Activated T-helper 1 cell treated with anti-CD3 and anti-CD28 coated beads, Interleukin-12 subunit alpha, Interleukin-12 subunit beta, Interleukin-2, Interleukin-4 antibody, amounts not matched to agents 30 ng/mL and 10 ng/mL and 1 ng/mL, durations not matched to agents 14 hours and 24 hours and 36 hours (primary cell): ENCODE measurements at regions of chr17 and their contacts with region 1.

Region 1: DNA sequence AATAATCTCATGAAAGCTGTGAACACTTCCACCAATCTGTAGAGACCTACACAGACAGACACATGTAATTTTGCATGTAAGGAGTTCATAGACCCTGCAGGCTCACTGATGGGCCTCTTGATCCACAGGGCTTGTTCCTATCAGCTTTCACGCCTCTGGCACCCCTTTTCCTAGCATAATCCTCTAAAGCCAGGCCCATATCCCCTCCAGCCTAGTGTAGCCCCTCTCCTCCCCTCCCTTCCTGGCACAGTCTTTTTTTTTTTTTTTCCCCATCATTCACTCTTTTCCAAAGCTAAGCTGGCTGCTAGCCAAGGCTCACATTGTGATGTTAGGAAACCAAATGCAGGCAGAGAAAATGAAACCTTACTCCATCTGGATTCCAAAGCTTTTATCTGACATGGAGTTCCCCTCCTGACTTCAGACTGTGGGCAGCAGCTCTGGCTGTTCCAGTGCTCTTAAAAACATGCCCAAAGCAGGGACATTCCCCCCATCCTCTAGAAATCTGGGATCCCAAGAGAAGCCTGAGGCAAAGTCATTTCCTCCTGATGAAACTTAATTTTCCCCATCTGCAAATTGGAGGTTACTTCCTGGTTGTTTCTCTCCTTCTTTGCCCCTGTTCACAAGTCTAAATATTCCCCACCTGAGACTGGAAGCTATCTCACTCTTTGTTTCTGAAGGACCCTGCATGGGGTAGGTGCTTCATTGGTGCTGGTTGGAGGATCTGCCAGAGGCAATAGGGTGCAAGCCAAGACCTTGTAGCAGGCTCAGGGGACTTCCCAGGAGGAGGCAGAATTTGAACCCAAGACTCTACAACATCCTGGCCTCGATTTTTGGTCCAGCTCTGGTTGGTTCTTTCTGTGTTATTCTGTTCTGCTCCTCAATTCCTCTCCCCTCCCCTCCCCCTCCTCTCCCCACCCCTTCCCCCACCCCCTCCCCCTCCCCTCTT is 9.9 kb upstream of the CCL5 start:
- DNase-seq: no peak
- H3K4me3 Mint-ChIP-seq: peak overlapping the region; percentile 66
- H3K27ac Mint-ChIP-seq: peak overlapping the region; percentile 94
- H3K4me1 Mint-ChIP-seq: peaks cover 56% of the 10 kb centered on the region
- H3K27me3 Mint-ChIP-seq: no peaks in the 10 kb centered on the region

Region 2: DNA sequence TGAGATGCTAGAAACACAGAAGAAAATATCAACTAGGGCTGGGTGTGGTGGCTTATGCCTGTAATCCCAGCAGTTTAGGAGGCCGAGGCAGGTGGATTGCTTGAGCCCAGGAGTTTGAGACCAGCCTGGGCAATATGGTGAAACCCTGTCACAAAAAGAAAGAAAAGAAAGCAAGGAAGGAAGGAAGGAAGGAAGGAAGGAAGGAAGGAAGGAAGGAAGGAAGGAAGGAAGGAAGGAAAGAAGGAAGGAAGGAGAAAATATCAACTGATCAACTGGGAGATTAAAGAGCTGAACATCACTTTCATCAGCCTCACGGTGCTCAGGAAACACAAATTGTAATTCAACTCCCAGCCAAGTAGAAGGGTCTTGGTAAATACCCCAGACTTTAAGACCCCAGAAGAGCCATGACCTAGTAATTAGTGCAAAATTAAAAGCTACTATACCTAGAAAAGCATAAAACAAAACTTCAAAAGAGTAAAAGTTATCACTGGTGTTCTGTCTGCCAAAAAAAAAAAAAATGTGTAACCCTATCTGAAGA is 413.7 kb before region 1 on chr17:
- intact Hi-C with region 1: no loop called
- DNase-seq: no peak
- H3K4me3 Mint-ChIP-seq: no peak overlapping the region
- H3K27ac Mint-ChIP-seq: peak overlapping the region; percentile 61
- H3K4me1 Mint-ChIP-seq: peaks cover 38% of the 10 kb centered on the region
- H3K27me3 Mint-ChIP-seq: no peaks in the 10 kb centered on the region

Region 3: GRCh38 chr17:35930211-35931065 is 40.3 kb after region 1 on chr17 and contains the start of gene RDM1:
- intact Hi-C with region 1: loop called (anchors 2 kb)
- DNase-seq: peak; percentile 89
- H3K4me3 Mint-ChIP-seq: peak within 1 kb of the TSS; percentile 88
- H3K27ac Mint-ChIP-seq: peak within 1 kb of the TSS; percentile 90
- H3K4me1 Mint-ChIP-seq: peaks cover 29% of the 10 kb centered on the region
- H3K27me3 Mint-ChIP-seq: peaks cover 18% of the 10 kb centered on the region
- total RNA-seq, gene RDM1: 1.7 and 2.3 TPM in 2 replicates

Region 4: DNA sequence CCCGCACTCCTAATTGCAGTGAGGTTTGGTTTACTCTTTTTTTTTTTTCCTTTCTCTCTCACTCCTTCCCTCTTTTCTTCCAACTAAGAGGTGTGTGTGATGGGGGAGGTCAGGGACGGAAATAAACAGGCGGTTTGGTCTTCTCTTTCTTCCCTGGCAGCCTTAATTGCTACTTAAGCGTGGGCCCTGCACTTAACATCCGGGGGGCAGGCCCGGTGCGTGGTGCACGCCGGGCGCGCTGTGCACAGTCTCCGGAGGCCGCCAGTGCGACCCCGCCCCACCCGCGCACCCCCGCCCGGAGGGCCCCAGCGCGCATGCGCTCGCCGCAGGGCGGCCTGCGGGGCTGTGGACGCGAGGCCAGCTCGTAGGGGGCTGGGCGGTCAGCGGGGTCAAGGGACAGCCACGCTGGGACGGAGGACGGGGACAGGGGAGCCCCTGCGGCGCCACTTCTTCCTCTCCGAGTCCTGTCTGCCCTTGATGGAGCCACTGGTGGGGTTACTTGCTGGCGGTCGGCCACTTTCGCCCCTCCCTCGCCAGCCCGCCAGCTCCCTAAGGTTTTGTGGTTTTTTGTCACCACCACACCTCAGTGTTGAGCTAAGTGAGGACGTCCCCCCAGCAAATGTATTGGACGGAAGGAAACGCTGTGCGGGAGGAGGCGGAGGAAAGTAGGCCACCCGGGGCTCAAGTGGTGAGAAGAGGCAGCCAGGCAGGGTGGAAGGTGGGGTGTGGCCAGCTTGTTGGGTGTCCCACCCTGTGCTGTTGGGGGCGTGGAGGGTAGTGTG is 832.2 kb after region 1 on chr17:
- intact Hi-C with region 1: loop called (anchors 5 kb)
- DNase-seq: peak; percentile 83
- H3K4me3 Mint-ChIP-seq: peak overlapping the region; percentile 79
- H3K27ac Mint-ChIP-seq: peak overlapping the region; percentile 95
- H3K4me1 Mint-ChIP-seq: peaks cover 56% of the 10 kb centered on the region
- H3K27me3 Mint-ChIP-seq: peaks cover 5% of the 10 kb centered on the region

Region 5: GRCh38 chr17:37844158-37844976 is 1954.3 kb after region 1 on chr17:
- intact Hi-C with region 1: loop called (anchors 10 kb)
- DNase-seq: peak; percentile 51
- H3K4me3 Mint-ChIP-seq: no peak overlapping the region
- H3K27ac Mint-ChIP-seq: no peak overlapping the region
- H3K4me1 Mint-ChIP-seq: peaks cover 49% of the 10 kb centered on the region
- H3K27me3 Mint-ChIP-seq: peaks cover 9% of the 10 kb centered on the region